ENCODE measurements at regions of chr10 and their contacts with region 1.

Region 1: GRCh38 chr10:34232481-34232880 is 582.6 kb downstream of the PARD3 start:
- DNase-seq: no peak
- H3K4me3 ChIP-seq: no peak overlapping the region
- H3K27ac ChIP-seq: no peak overlapping the region
- H3K4me1 ChIP-seq: no peaks in the 10 kb centered on the region
- H3K27me3 ChIP-seq: no peaks in the 10 kb centered on the region
- CTCF ChIP-seq: no peak

Region 2: GRCh38 chr10:34058845-34059614 is 173.5 kb before region 1 on chr10:
- CTCF ChIA-PET with region 1: no interaction called
- POLR2A ChIA-PET with region 1: interaction called, 19 read pairs
- intact Hi-C with region 1: no loop called
- DNase-seq: no peak
- H3K4me3 ChIP-seq: no peak overlapping the region
- H3K27ac ChIP-seq: no peak overlapping the region
- H3K4me1 ChIP-seq: no peaks in the 10 kb centered on the region
- H3K27me3 ChIP-seq: no peaks in the 10 kb centered on the region
- CTCF ChIP-seq: no peak

Region 3: GRCh38 chr10:34244756-34245484 is 12.4 kb after region 1 on chr10:
- CTCF ChIA-PET with region 1: no interaction called
- POLR2A ChIA-PET with region 1: no interaction called
- intact Hi-C with region 1: no loop called
- DNase-seq: no peak
- H3K4me3 ChIP-seq: no peak overlapping the region
- H3K27ac ChIP-seq: no peak overlapping the region
- H3K4me1 ChIP-seq: no peaks in the 10 kb centered on the region
- H3K27me3 ChIP-seq: no peaks in the 10 kb centered on the region
- CTCF ChIP-seq: no peak

Measured in PC-9 (cell line).